ENCODE measurements at regions of chr1 and their contacts with region 1.

Region 1: GRCh38 chr1:162854245-162854882 is 6.6 kb downstream of the CCDC190 start:
- DNase-seq: peak; percentile 88
- H3K4me3 Mint-ChIP-seq: no peak overlapping the region
- H3K27ac Mint-ChIP-seq: no peak overlapping the region
- H3K4me1 Mint-ChIP-seq: peaks cover 32% of the 10 kb centered on the region
- H3K27me3 Mint-ChIP-seq: peaks cover 33% of the 10 kb centered on the region
- CTCF ChIP-seq: peak; percentile 71

Region 2: GRCh38 chr1:162561617-162562474 is 292.5 kb before region 1 on chr1 and contains the start of gene UAP1:
- CTCF ChIA-PET with region 1: no interaction called
- POLR2A ChIA-PET with region 1: no interaction called
- intact Hi-C with region 1: no loop called
- DNase-seq: no peak
- H3K4me3 Mint-ChIP-seq: peak within 1 kb of the TSS; percentile 82
- H3K27ac Mint-ChIP-seq: peak within 1 kb of the TSS; percentile 91
- H3K4me1 Mint-ChIP-seq: peaks cover 44% of the 10 kb centered on the region
- H3K27me3 Mint-ChIP-seq: no peaks in the 10 kb centered on the region
- CTCF ChIP-seq: no peak
- total RNA-seq, gene UAP1: 479 and 542 TPM in 2 replicates

Region 3: GRCh38 chr1:162690672-162691434 is 163.5 kb before region 1 on chr1:
- CTCF ChIA-PET with region 1: no interaction called
- POLR2A ChIA-PET with region 1: no interaction called
- intact Hi-C with region 1: no loop called
- DNase-seq: peak; percentile 99
- H3K4me3 Mint-ChIP-seq: no peak overlapping the region
- H3K27ac Mint-ChIP-seq: peak overlapping the region; percentile 46
- H3K4me1 Mint-ChIP-seq: peaks cover 26% of the 10 kb centered on the region
- H3K27me3 Mint-ChIP-seq: no peaks in the 10 kb centered on the region
- CTCF ChIP-seq: no peak

Region 4: GRCh38 chr1:162835157-162835899 is 19.0 kb before region 1 on chr1:
- CTCF ChIA-PET with region 1: interaction called, 22 read pairs
- POLR2A ChIA-PET with region 1: no interaction called
- intact Hi-C with region 1: no loop called
- DNase-seq: no peak
- H3K4me3 Mint-ChIP-seq: no peak overlapping the region
- H3K27ac Mint-ChIP-seq: no peak overlapping the region
- H3K4me1 Mint-ChIP-seq: no peaks in the 10 kb centered on the region
- H3K27me3 Mint-ChIP-seq: peaks cover 15% of the 10 kb centered on the region
- CTCF ChIP-seq: no peak

Region 5: GRCh38 chr1:162878000-162878596 is 23.7 kb after region 1 on chr1:
- CTCF ChIA-PET with region 1: interaction called, 20 read pairs
- POLR2A ChIA-PET with region 1: no interaction called
- intact Hi-C with region 1: loop called (anchors 1 kb)
- DNase-seq: peak; percentile 87
- H3K4me3 Mint-ChIP-seq: no peak overlapping the region
- H3K27ac Mint-ChIP-seq: no peak overlapping the region
- H3K4me1 Mint-ChIP-seq: no peaks in the 10 kb centered on the region
- H3K27me3 Mint-ChIP-seq: peaks cover 26% of the 10 kb centered on the region
- CTCF ChIP-seq: peak; percentile 95

Region 6: DNA sequence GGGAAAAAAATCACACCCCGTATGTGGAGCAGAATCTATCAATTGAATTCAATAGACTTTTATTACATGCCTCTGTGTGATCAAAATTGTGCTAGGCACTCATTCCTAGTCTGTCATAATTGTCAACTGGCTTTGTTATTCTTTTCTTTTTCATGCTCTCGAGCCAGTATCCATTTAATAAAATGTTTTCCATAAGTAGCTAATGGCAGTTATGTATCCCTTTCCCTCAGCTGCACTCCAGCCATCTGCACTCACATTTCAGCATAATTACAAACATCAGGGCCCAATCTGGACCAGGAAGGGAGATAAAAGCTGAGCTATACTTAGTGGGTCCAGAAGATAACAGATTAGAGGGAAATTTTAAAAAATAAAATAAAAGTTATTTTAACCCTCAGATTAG is 332.5 kb after region 1 on chr1:
- CTCF ChIA-PET with region 1: interaction called, 13 read pairs
- POLR2A ChIA-PET with region 1: no interaction called
- intact Hi-C with region 1: no loop called
- DNase-seq: no peak
- H3K4me3 Mint-ChIP-seq: no peak overlapping the region
- H3K27ac Mint-ChIP-seq: no peak overlapping the region
- H3K4me1 Mint-ChIP-seq: no peaks in the 10 kb centered on the region
- H3K27me3 Mint-ChIP-seq: no peaks in the 10 kb centered on the region
- CTCF ChIP-seq: no peak

Region 7: DNA sequence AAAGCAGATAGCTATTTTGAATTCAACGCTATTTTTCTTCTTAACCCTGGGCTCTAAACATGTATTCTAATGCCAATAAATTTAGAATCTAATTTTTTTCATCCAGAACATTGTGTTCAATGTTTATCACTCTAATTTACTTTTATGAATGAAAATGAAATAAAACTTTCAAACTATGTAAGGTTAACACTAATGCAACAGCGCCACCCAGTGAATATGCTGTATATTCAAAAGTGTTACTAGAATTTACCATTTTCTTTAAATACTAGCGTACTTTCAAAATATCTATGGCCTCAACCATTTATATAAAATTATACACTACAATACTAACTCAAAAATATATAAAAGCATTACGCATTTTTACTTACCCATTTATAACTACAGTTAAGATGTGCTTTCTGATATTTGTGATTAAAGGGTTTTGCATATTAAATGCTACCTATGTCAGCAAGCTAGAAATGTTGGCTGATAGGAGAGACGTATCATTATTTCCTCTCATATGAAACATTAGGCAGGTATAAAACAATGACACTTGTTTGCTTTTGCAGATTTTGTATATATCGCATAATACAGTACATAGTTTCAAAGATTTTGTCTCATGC is 461.5 kb after region 1 on chr1:
- CTCF ChIA-PET with region 1: interaction called, 84 read pairs
- POLR2A ChIA-PET with region 1: interaction called, 7 read pairs
- intact Hi-C with region 1: loop called (anchors 1 kb)
- DNase-seq: peak; percentile 68
- H3K4me3 Mint-ChIP-seq: no peak overlapping the region
- H3K27ac Mint-ChIP-seq: no peak overlapping the region
- H3K4me1 Mint-ChIP-seq: peaks cover 4% of the 10 kb centered on the region
- H3K27me3 Mint-ChIP-seq: no peaks in the 10 kb centered on the region
- CTCF ChIP-seq: peak; percentile 61